Activated CD8-positive, alpha-beta memory T cell treated with anti-CD3 and anti-CD28 coated beads, Interleukin-2, amount 10 ng/mL, durations not matched to agents 7 days and 5 days (primary cell): ENCODE measurements at regions of chr12 and their contacts with region 1.

Region 1: GRCh38 chr12:53159195-53159839 is 21.2 kb upstream of the ZNF740 start:
- DNase-seq: peak; percentile 96
- ATAC-seq: peak; percentile 99
- H3K4me3 Mint-ChIP-seq: peak overlapping the region; percentile 4
- H3K27ac Mint-ChIP-seq: peak overlapping the region; percentile 72
- H3K4me1 Mint-ChIP-seq: peaks cover 17% of the 10 kb centered on the region
- H3K27me3 Mint-ChIP-seq: no peaks in the 10 kb centered on the region

Region 2: GRCh38 chr12:52774629-52775250 is 384.6 kb before region 1 on chr12:
- CTCF ChIA-PET with region 1: no interaction called
- DNase-seq: no peak
- ATAC-seq: no peak
- H3K4me3 Mint-ChIP-seq: no peak overlapping the region
- H3K27ac Mint-ChIP-seq: no peak overlapping the region
- H3K4me1 Mint-ChIP-seq: no peaks in the 10 kb centered on the region
- H3K27me3 Mint-ChIP-seq: peaks cover 33% of the 10 kb centered on the region

Region 3: DNA sequence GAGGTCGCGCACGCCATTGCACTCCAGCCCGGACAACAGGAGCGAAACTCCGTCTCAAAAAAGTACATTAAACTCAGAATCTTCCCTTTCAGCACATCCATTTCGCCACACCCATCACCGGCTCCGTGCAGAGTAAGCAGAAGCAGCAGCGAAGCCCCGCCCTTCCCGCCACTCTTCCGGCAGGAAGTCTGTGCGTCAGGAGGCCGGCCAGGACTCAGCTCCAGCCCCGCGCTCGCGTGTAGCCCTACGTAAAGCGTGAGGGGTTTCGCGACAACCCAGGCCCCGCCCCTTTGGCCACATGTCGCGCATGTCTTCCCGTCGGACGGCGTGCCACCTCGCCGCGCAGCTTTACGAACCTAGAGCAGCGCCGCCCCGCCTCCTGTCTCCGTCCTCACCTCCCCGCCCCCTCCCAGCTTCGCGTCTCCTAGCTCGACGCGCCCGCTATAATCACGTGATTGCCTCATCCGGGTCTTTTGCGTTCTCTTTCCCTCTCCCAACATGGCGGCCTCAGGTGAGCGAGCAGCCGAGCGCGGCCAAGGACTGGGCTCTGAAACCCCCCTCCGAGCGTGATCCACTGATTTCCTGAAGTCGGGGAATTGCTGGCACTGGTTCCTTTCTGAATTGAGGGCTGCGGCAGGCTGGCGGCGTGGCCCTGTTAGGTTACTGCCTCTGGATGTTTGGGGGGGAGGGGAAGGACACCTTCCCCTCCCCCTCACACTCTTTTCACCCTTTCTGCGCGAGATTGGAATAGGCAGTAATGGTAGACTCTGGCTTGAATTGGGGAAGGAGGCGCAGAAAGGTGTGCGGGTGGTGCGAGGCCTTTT is 153.1 kb before region 1 on chr12 and contains the start of gene EIF4B:
- CTCF ChIA-PET with region 1: no interaction called
- DNase-seq: peak; percentile 100
- ATAC-seq: peak; percentile 96
- H3K4me3 Mint-ChIP-seq: peak within 1 kb of the TSS; percentile 83
- H3K27ac Mint-ChIP-seq: peak within 1 kb of the TSS; percentile 95
- H3K4me1 Mint-ChIP-seq: peaks cover 46% of the 10 kb centered on the region
- H3K27me3 Mint-ChIP-seq: no peaks in the 10 kb centered on the region
- total RNA-seq, gene EIF4B: 264 to 382 TPM

Region 4: GRCh38 chr12:53098982-53099651 is 60.2 kb before region 1 on chr12:
- CTCF ChIA-PET with region 1: interaction called, 16 read pairs
- DNase-seq: peak; percentile 93
- ATAC-seq: peak; percentile 47
- H3K4me3 Mint-ChIP-seq: peak overlapping the region; percentile 72
- H3K27ac Mint-ChIP-seq: peak overlapping the region; percentile 80
- H3K4me1 Mint-ChIP-seq: peaks cover 56% of the 10 kb centered on the region
- H3K27me3 Mint-ChIP-seq: peaks cover 4% of the 10 kb centered on the region

Region 5: GRCh38 chr12:53190108-53190729 is 30.9 kb after region 1 on chr12:
- CTCF ChIA-PET with region 1: interaction called, 44 read pairs
- DNase-seq: peak; percentile 59
- ATAC-seq: peak; percentile 79
- H3K4me3 Mint-ChIP-seq: no peak overlapping the region
- H3K27ac Mint-ChIP-seq: no peak overlapping the region
- H3K4me1 Mint-ChIP-seq: peaks cover 21% of the 10 kb centered on the region
- H3K27me3 Mint-ChIP-seq: no peaks in the 10 kb centered on the region

Region 6: GRCh38 chr12:53213348-53213747 is 54.0 kb after region 1 on chr12:
- CTCF ChIA-PET with region 1: interaction called, 40 read pairs
- DNase-seq: peak; percentile 88
- ATAC-seq: peak; percentile 73
- H3K4me3 Mint-ChIP-seq: no peak overlapping the region
- H3K27ac Mint-ChIP-seq: no peak overlapping the region
- H3K4me1 Mint-ChIP-seq: peaks cover 73% of the 10 kb centered on the region
- H3K27me3 Mint-ChIP-seq: no peaks in the 10 kb centered on the region

Region 7: DNA sequence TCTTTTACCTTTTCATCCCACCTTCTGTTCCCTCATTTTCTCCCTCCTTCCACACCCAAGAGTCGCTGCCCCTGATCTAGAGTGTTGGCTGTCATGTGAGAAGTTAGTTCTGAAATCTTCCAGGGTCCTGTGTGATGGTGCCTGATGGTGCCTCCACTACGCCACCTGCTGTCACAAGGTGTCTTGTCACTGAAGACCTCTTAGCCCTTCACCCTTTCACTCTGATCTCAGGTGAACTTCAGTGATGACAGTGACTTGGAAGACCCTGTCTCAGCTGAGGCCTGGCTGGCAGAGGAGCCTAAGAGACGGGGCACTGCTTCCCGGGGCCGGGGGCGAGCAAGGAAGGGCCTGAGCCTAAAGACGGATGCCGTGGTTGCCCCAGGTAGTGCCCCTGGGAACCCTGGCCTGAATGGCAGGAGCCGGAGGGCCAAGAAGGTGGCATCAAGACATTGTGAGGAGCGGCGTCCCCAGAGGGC is 128.5 kb after region 1 on chr12:
- CTCF ChIA-PET with region 1: interaction called, 28 read pairs
- DNase-seq: peak; percentile 75
- ATAC-seq: peak; percentile 80
- H3K4me3 Mint-ChIP-seq: no peak overlapping the region
- H3K27ac Mint-ChIP-seq: peak overlapping the region; percentile 5
- H3K4me1 Mint-ChIP-seq: peaks cover 4% of the 10 kb centered on the region
- H3K27me3 Mint-ChIP-seq: no peaks in the 10 kb centered on the region

Region 8: GRCh38 chr12:53344824-53345485 is 185.6 kb after region 1 on chr12:
- CTCF ChIA-PET with region 1: interaction called, 21 read pairs
- DNase-seq: peak; percentile 82
- ATAC-seq: peak; percentile 83
- H3K4me3 Mint-ChIP-seq: peak overlapping the region; percentile 79
- H3K27ac Mint-ChIP-seq: peak overlapping the region; percentile 71
- H3K4me1 Mint-ChIP-seq: peaks cover 21% of the 10 kb centered on the region
- H3K27me3 Mint-ChIP-seq: peaks cover 12% of the 10 kb centered on the region